Colonic mucosa (tissue), 4 donors: ENCODE measurements at regions of chr5 and their contacts with region 1.

Region 1: DNA sequence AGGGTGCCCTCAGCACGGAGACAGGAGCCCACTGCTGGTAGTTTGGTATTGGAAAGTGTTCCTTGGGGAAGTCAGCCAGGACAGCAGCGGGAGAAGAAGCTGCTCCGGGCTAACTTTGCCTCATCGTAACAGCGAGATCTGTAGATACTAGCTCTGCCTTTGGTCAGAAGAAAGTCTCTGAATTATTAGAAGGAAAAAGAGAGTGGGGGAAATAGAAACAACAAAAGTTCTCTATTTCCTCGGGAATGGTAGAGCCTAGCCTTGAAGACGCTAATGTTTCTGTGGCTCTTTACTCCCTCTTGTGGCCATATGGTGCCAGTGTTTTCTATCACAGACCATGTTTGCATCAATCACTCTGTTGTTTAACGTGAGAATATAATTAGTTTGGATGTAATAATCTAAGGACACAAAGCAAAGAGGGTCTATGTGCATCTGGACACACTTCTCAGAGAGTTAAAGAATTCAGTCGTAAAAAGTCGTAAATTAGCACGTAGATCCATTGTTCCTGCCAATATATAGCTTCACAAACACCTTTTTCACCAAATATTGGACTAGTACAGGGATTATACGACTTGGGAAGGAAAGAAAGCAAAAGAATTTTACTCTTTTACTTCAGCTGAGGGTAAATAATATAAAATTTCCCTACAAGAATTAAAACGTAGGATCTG is 40.2 kb upstream of the HSD17B4 start:
- DNase-seq: peak; percentile 76
- H3K4me3 ChIP-seq: peak overlapping the region; percentile 36
- H3K27ac ChIP-seq: peak overlapping the region; percentile 45
- H3K4me1 ChIP-seq: no peaks in the 10 kb centered on the region
- H3K27me3 ChIP-seq: no peaks in the 10 kb centered on the region
- CTCF ChIP-seq: peak; percentile 88

Region 2: DNA sequence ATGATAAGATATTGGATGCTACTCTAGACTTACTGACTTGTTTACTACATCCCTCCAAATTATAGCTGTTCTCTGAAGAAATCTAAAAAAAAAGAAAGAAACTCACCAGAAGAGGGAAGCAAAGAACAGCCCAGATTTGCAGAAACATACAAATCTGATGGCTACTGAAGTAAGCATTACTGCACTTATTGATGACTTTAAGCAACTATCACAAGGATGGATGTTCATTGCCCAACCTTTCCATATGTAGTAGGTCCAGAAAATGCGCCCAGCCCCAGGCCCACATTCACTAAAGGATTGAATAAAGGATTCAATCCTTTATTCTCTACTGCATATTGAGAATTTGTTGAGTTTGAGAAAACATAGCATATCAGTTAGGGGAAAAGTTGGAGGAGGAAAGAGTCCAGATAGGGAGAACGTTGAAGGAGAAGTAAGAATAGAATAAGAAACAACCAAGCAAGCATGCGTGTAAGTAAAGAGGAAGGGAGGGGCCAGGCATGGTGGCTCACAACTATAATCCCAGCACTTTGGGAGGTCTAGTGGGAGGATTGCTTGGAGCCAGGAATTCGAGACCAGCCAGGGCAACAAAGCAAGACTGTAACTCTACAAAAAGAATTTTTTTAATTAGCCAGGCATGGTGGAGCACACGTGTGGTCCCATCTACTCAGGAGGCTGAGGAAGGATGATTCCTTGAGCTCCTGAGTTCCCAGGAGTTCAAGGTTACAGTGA is 389.9 kb before region 1 on chr5:
- intact Hi-C with region 1: loop called (anchors 10 kb)
- DNase-seq: no peak
- H3K4me3 ChIP-seq: no peak overlapping the region
- H3K27ac ChIP-seq: no peak overlapping the region
- H3K4me1 ChIP-seq: no peaks in the 10 kb centered on the region
- H3K27me3 ChIP-seq: no peaks in the 10 kb centered on the region
- CTCF ChIP-seq: peak; percentile 32